ENCODE measurements at regions of chr13 and their contacts with region 1.

Region 1: DNA sequence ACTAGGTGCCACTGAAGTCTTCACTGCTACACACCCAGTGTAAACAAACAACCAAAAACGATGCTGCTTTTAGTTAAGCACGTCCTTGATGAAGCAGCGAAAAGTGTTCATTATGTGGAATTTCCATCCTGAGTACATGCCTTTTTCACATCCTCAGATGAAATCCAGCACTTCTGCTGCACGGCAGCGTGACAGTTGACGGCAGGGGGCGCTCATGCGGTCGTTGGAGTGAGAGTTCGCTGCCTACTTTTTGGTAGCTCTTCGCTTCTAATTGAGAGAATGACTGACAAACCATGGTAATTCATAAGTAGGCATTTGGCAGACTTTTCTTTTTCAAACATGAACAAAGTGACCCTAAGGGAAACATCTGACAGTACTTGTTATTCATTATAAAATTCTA is 1124.9 kb downstream of the EFNB2 start:
- DNase-seq: peak; percentile 49 to 62
- ATAC-seq: no peak
- H3K4me3 ChIP-seq: peak overlapping the region in 1 of 10 donors; percentile 36
- H3K27ac ChIP-seq: no peak overlapping the region
- H3K4me1 ChIP-seq: no peaks in the 10 kb centered on the region
- H3K27me3 ChIP-seq: no peaks in the 10 kb centered on the region
- CTCF ChIP-seq: peak; percentile 38 to 70 (median 58)

Region 2: GRCh38 chr13:105343134-105343806 is 67.3 kb before region 1 on chr13:
- intact Hi-C with region 1: loop called in 1 of 10 experiments (anchors 2 kb)
- DNase-seq: no peak
- ATAC-seq: no peak
- H3K4me3 ChIP-seq: no peak overlapping the region
- H3K27ac ChIP-seq: no peak overlapping the region
- H3K4me1 ChIP-seq: no peaks in the 10 kb centered on the region
- H3K27me3 ChIP-seq: no peaks in the 10 kb centered on the region
- CTCF ChIP-seq: no peak